Right lobe of liver (tissue), 6 donors: ENCODE measurements at regions of chr12 and their contacts with region 1.

Region 1: DNA sequence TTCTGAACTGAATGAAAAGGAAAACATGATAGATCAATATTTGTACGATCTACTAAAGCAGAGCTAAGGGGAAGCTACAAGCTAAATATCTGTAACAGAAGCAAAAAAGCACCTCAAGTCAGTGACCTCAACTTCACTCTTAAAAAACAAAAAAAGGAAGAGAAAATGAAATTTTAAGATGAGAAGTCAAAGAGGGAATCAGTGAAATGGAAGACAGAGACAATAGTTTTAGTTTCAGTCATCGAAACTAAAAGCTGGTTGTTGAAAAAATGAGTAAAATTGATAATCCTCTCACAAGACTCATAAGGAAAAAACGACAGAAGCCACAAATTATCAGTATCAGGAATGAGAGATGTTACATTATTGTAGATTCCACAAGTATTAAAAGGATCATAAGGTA is 11.9 kb upstream of the SLC2A13 start:
- DNase-seq: no peak
- ATAC-seq: no peak
- H3K4me3 ChIP-seq: no peak overlapping the region
- H3K27ac ChIP-seq: no peak overlapping the region
- H3K4me1 ChIP-seq: no peaks in the 10 kb centered on the region
- H3K27me3 ChIP-seq: no peaks in the 10 kb centered on the region
- CTCF ChIP-seq: no peak
- POLR2A ChIP-seq: no peak

Region 2: DNA sequence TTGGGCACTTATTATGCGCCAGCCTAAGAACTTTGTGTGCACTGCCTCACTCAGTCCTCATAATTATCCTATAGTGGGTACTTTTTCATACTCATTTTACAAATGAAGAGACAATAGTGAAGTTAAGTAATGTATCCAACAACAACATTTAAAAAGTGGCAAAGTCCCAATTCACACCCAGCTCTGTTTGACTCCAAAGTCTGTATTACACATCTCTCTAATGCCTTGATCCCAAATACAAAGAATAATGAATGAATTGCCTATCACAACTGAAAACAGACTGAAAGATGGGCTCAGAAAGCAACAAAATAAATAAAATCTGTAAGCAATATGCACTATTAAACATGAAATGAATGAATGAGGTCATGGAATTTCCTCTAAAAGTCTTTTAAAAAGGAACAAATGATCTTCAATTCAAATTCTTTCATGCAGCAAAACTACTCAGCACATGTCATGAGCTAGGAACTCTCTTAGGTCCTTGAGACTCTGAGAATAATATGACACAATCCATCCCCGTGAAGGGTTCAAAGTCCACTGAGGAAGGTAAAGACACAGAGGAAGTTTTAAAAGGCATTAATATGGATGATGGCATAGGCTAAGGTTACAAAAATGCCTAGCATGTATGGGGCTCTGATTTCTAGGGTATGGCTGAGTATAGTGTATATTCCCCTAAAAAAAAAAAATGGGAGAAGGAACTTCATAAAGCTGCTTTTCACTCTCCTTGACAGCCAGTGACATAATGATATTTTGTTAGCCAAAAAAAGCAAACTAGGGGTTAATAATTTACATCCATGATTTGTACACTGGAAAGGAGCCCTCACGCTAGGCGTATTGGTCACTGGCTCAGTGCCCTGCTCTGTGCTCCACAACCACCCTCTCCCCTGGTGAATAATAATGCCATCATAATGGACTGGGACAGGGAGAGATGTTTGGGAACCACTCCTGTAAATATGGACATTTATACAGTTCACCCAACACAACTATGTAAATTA is 115.3 kb before region 1 on chr12:
- intact Hi-C with region 1: loop called in 1 of 2 experiments (anchors 10 kb)
- DNase-seq: peak in 1 of 3 donors; percentile 63
- ATAC-seq: peak; percentile 81 to 97 (median 91)
- H3K4me3 ChIP-seq: no peak overlapping the region
- H3K27ac ChIP-seq: peak overlapping the region in 1 of 3 donors; percentile 11
- H3K4me1 ChIP-seq: peaks cover 0 to 11% (median 4%) of the 10 kb centered on the region in 4 donors
- H3K27me3 ChIP-seq: no peaks in the 10 kb centered on the region
- CTCF ChIP-seq: no peak
- POLR2A ChIP-seq: no peak